Activated naive CD4-positive, alpha-beta T cell treated with anti-CD3 and anti-CD28 coated beads for 36 hours (primary cell): ENCODE measurements at regions of chr3 and their contacts with region 1.

Region 1: DNA sequence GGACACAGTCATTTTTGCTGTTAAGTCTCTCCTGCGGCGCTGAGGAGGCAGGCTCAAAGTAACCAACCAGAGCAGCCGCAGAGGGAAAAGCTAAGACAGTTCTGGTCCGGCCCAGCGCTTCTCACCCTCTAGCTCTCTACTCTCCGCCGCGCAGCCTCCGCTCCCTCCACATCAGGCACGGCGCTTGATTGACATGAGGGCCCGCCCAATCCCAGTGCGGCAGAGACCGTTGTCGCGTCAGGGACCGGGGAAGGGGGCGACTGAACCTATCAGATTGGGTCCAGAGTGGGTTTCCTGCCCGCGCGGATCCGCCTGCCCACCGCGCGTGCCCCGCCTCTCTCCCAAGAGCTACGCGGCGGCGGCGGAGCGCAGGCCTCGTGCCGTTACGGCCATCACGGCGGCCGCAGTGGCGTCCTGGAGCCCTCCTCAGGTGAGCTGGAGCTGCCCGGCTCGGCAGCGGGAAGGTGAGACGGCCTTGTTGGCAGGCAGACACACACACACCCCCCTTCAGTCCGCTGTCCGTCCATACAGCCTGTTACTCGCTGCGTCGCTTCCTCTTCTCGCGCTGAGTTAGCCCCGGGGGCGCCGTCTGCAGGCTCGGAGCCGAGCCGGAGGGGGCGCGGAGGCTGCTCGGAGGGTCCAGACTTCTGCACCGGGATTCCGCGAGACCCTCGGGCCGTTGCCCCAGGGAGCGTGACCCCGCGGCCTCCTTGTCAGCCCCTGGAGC is at the start of gene NCK1:
- DNase-seq: peak; percentile 99
- H3K4me3 Mint-ChIP-seq: peak within 1 kb of the TSS; percentile 94
- H3K27ac Mint-ChIP-seq: peak within 1 kb of the TSS; percentile 95
- H3K4me1 Mint-ChIP-seq: peaks cover 41% of the 10 kb centered on the region
- H3K27me3 Mint-ChIP-seq: no peaks in the 10 kb centered on the region
- total RNA-seq, gene NCK1: 24.1 to 29.2 TPM

Region 2: DNA sequence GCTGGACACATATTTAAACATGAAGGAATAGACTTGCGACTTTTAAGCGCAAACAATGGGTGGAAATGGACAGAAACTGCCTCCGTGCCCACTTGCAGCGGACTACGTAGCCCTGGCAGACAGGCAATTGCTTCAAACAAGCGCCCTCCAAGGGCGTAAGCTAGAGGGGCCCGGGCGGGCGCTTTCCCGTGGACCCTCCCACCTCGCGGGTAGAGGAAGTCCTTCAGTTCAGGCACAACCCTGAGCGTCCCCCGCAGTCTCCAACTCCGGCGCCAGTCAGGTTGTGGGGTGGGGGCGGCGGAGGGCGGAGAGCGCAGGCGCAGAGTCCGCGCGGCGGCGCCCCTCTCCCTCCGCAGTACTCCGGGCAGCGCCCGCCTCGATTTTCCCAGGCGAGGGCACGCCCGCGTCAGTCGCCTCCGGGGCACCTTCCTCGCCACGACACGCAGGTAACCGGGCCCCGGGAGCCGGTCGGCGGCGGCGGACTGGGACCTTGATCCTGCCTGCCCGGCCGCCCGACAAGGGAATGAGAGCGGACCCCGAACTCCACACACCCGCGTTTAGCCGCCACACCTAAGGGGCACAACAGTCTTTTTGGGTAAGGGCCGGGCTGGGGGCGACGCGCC is 43.2 kb before region 1 on chr3 and contains the start of gene SLC35G2:
- CTCF ChIA-PET with region 1: no interaction called
- intact Hi-C with region 1: loop called (anchors 1 kb)
- DNase-seq: peak; percentile 38
- H3K4me3 Mint-ChIP-seq: peak within 1 kb of the TSS; percentile 69
- H3K27ac Mint-ChIP-seq: no peak within 1 kb of the TSS
- H3K4me1 Mint-ChIP-seq: peaks cover 19% of the 10 kb centered on the region
- H3K27me3 Mint-ChIP-seq: peaks cover 39% of the 10 kb centered on the region
- total RNA-seq, gene SLC35G2: 0.31 TPM in 1 of 2 experiments, not detected in the other

Region 3: DNA sequence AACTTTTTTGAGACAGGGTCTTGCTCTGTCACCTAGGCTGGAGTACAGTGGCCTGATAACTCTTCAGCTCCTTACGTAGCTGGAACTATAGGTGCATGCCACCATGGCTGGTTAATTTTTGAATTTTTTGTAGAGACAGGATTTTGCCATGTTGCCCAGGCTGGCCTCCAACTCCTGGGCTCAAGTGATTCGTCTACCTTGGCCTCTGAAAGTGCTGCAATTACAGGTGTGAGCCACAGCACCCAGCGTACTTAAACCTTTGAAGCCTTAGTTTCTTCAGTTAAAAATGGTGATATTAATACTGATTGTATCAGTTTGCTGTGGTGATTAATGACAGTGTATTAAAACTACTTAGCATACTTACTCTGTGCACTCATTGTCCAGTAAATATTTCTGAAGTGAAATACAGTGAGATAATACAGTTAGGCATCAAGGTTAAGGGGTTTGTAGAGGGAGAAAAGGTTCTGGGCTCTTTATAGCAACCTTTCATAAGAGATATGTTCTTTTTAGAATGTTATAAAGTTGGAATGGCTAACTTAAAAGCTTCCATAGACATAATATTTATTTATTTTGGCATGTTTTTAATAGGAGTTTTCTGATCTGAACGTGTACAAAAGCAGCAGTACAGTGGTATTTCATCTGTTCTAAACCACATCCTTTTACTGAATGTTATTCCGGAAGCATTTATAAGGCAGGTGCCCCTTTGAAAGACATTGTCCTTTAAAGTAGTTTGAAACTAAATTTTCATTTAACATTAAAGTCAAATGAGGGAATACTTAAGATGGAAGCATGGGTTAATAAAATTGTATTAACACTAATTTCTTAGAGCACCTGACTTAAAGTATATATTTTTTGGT is 23.5 kb after region 1 on chr3:
- CTCF ChIA-PET with region 1: no interaction called
- intact Hi-C with region 1: no loop called
- DNase-seq: peak; percentile 32
- H3K4me3 Mint-ChIP-seq: no peak overlapping the region
- H3K27ac Mint-ChIP-seq: peak overlapping the region; percentile 74
- H3K4me1 Mint-ChIP-seq: peaks cover 66% of the 10 kb centered on the region
- H3K27me3 Mint-ChIP-seq: no peaks in the 10 kb centered on the region

Region 4: GRCh38 chr3:136899622-136900158 is 37.6 kb after region 1 on chr3:
- CTCF ChIA-PET with region 1: interaction called, 3 read pairs
- intact Hi-C with region 1: loop called (anchors 1 kb)
- DNase-seq: peak; percentile 19
- H3K4me3 Mint-ChIP-seq: peak overlapping the region; percentile 26
- H3K27ac Mint-ChIP-seq: peak overlapping the region; percentile 67
- H3K4me1 Mint-ChIP-seq: peaks cover 50% of the 10 kb centered on the region
- H3K27me3 Mint-ChIP-seq: no peaks in the 10 kb centered on the region

Region 5: GRCh38 chr3:136929984-136930670 is 68.1 kb after region 1 on chr3:
- CTCF ChIA-PET with region 1: interaction called, 4 read pairs
- intact Hi-C with region 1: loop called (anchors 2 kb)
- DNase-seq: no peak
- H3K4me3 Mint-ChIP-seq: no peak overlapping the region
- H3K27ac Mint-ChIP-seq: no peak overlapping the region
- H3K4me1 Mint-ChIP-seq: peaks cover 51% of the 10 kb centered on the region
- H3K27me3 Mint-ChIP-seq: no peaks in the 10 kb centered on the region